ENCODE measurements at regions of chr18 and their contacts with region 1.

Region 1: DNA sequence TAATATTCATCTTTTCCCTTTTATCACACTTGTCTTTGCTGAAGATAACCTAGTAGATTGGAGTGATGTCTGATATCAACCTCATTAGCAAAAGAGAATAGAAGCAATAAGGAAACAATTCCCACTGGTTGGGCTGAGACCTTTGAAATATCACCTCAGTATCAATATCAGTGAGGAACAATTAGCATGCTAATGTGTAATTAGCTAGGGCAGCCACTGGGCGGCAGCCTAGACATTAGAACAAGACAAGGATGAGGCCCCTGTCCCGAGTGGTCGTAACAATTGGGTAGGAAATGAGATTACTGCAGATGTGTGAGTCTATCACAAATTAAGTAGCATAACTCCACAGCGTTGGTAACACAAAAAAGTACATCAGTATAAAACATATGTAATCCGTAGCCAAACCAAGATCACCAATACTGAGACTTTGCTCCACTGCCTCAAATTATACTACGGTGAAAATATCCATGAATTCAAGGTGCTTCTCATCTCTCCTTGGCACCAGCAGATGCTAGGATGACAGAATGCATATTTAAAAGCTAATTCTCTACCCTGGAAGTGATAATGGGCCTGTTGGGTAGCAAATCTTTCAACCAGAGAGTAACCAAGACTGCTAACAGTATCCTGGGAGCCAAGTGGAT is 99.1 kb downstream of the ALPK2 start:
- DNase-seq: no peak
- H3K4me3 ChIP-seq: no peak overlapping the region
- H3K27ac ChIP-seq: no peak overlapping the region
- H3K4me1 ChIP-seq: peaks cover 8% of the 10 kb centered on the region
- H3K27me3 ChIP-seq: no peaks in the 10 kb centered on the region
- CTCF ChIP-seq: peak; percentile 88 to 93

Region 2: DNA sequence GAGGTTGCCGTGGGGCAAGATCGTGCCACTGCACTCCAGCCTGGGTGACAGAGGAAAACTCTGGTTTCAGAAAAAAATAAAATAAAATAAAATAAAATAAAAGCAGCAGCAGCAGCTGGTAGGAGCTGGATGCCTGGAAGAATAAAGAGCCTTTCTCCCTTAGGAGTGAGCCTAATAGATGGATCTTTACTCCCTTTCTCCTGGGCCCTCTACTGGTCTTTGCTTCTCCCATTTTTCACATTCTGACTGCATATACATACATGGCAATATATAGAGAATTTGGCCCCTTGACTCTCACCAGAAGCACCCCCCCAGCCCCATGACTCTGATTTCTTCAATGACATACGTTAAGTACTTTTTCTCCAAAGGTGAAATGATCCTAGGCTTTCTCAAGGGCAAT is 131.6 kb after region 1 on chr18:
- CTCF ChIA-PET with region 1: interaction called, 8 read pairs
- dilution Hi-C with region 1: no loop called
- in situ Hi-C with region 1: no loop called
- intact Hi-C with region 1: loop called (anchors 1 kb)
- DNase-seq: no peak
- H3K4me3 ChIP-seq: no peak overlapping the region
- H3K27ac ChIP-seq: no peak overlapping the region
- H3K4me1 ChIP-seq: no peaks in the 10 kb centered on the region
- H3K27me3 ChIP-seq: no peaks in the 10 kb centered on the region
- CTCF ChIP-seq: peak in 1 of 2 donors; percentile 46

Region 3: DNA sequence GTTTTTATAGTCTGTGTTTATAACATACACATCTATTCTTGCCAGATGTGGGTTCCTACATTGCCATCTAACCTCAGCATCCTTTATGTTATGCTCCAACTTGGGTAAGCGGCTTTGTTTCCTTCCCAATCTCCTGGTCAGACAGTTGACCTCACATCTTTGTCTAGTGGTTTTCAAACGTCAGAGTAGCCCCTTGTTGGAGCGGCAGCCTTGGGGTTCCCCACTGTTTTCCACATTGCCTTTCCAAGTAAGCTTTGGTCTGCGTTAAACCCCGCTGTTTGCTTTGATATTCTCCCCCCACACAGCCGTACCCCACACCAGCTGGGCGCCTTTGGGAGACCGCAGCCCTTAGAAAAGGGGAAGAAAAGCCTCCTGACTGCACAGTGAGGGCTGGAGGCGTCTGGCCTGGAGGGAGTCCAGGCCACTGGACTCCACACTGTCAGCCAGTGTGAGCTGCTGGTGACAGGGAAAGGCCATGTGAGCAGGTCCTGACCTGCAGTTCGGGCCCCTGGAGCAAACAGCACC is 224.8 kb after region 1 on chr18:
- CTCF ChIA-PET with region 1: interaction called, 3 read pairs
- dilution Hi-C with region 1: loop called (anchors 5 kb)
- in situ Hi-C with region 1: no loop called
- intact Hi-C with region 1: no loop called
- DNase-seq: no peak
- H3K4me3 ChIP-seq: no peak overlapping the region
- H3K27ac ChIP-seq: no peak overlapping the region
- H3K4me1 ChIP-seq: peaks cover 13% of the 10 kb centered on the region
- H3K27me3 ChIP-seq: no peaks in the 10 kb centered on the region
- CTCF ChIP-seq: no peak

Region 4: DNA sequence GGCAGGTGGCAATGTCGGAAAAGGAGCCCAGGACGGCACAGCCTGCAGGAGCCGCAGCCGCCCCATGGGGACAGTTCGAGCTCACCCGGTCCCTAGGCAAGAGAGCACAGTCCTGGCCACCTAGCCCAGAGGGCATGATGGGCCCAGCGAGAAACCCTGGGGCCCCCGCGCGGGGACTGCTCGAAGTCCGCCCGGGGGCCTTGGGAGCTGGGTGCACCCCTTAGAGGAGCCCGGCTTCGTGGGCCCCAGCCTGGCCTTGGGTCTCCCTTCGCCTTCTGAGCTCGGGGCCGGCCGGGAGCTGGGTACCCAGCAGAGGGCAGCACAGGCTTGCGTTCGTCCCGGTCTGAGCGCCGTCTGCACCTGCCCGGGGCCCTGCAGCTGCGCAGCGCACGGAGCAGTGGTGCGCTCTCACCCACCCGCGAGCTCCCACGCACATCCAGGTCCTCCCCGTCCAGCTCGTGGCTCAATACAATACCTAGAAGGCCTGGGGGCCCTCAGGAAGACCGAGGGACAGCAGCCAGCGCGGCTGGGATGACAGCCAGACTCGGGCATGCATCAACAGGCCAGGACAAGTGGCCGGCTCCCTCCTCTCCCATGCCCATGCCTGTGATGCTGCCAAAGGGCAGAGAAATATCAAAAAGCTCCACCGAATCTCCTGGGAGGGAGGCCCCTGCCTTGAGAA is 238.6 kb after region 1 on chr18:
- CTCF ChIA-PET with region 1: interaction called, 12 read pairs
- dilution Hi-C with region 1: no loop called
- in situ Hi-C with region 1: loop called (anchors 5 kb)
- intact Hi-C with region 1: loop called (anchors 1 kb)
- DNase-seq: peak; percentile 84
- H3K4me3 ChIP-seq: peak overlapping the region in 1 of 3 experiments; percentile 28
- H3K27ac ChIP-seq: no peak overlapping the region
- H3K4me1 ChIP-seq: peaks cover 20% of the 10 kb centered on the region
- H3K27me3 ChIP-seq: no peaks in the 10 kb centered on the region
- CTCF ChIP-seq: peak; percentile 52 to 83

Region 5: GRCh38 chr18:59070181-59070912 is 540.5 kb after region 1 on chr18:
- CTCF ChIA-PET with region 1: no interaction called
- dilution Hi-C with region 1: loop called (anchors 25 kb)
- in situ Hi-C with region 1: no loop called
- intact Hi-C with region 1: no loop called
- DNase-seq: peak; percentile 67
- H3K4me3 ChIP-seq: no peak overlapping the region
- H3K27ac ChIP-seq: no peak overlapping the region
- H3K4me1 ChIP-seq: peaks cover 3% of the 10 kb centered on the region
- H3K27me3 ChIP-seq: no peaks in the 10 kb centered on the region
- CTCF ChIP-seq: peak; percentile 86 to 88

Measured in mammary epithelial cell (primary cell).